A549 (cell line): ENCODE measurements at regions of chr2 and their contacts with region 1.

Region 1: DNA sequence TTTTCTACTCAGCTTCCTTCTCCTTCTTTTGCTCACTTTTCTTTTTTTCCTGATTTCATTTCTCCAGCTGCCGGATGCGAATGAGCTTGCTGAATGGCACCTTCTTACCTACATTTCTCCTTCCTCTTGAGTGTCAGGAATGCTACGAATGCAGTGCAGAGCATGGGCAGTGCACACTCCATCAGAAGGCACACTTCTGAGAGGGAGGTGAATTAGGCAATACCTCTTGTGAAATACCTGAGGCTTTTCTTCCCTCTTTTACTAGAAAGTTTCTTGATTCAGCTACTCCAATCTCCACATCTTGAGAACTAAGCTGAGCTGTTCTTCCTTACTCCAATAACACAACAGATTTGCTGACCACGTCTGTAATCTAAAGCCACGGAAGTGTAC is 51.1 kb downstream of the PLEKHM3 start:
- DNase-seq: peak in 1 of 2 experiments; percentile 26
- ATAC-seq: peak; percentile 51 to 59; a peak in 5 of 6 replicates
- H3K4me3 ChIP-seq: no peak overlapping the region
- H3K27ac ChIP-seq: no peak overlapping the region
- H3K4me1 ChIP-seq: peaks cover 24% of the 10 kb centered on the region
- CTCF ChIP-seq: no peak
- EP300 ChIP-seq: no peak
- POLR2A ChIP-seq: no peak
- RAD21 ChIP-seq: no peak

Region 2: GRCh38 chr2:207499114-207499513 is 475.1 kb before region 1 on chr2:
- CTCF ChIA-PET with region 1: no interaction called
- POLR2A ChIA-PET with region 1: no interaction called
- DNase-seq: no peak
- ATAC-seq: no peak
- H3K4me3 ChIP-seq: no peak overlapping the region
- H3K27ac ChIP-seq: no peak overlapping the region
- H3K4me1 ChIP-seq: no peaks in the 10 kb centered on the region
- CTCF ChIP-seq: no peak
- EP300 ChIP-seq: no peak
- POLR2A ChIP-seq: no peak
- RAD21 ChIP-seq: no peak

Region 3: DNA sequence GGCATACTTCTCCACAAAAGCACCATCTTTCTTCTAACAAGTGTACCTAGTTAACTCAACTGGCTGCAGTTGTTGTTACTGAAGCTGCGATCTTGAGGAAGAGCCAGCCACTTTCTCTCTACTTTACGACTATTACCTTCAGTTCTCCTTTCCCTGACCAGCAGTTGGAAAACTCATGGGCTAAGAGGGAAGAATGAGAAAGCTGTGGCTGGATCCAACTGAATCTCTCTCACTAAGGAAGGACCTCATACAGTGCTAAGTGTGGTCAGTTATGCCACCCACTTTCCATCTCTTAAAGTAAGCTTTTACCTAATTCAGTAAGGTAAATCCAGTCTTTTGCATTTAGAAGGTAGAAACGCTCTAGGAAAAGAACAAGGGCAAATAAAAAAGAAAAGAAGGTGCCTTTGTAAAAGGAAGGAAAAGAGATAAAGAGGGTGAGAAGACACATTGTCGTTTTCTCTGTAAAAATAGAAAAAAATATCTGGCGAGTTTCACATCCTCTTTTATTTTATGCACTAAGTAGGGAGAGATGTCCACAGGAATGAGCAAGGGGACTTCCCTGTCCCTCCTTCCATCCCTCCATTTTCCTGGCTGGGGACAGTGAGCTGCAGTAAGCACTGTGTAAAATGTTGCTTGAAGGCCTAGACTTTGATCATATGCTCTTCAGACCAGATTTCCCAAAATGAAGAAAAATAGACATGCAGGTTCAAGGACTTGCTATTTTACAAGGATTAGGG is 22.3 kb before region 1 on chr2:
- CTCF ChIA-PET with region 1: interaction called, 11 read pairs
- POLR2A ChIA-PET with region 1: no interaction called
- DNase-seq: no peak
- ATAC-seq: no peak
- H3K4me3 ChIP-seq: no peak overlapping the region
- H3K27ac ChIP-seq: no peak overlapping the region
- H3K4me1 ChIP-seq: no peaks in the 10 kb centered on the region
- CTCF ChIP-seq: no peak
- EP300 ChIP-seq: no peak
- POLR2A ChIP-seq: no peak
- RAD21 ChIP-seq: no peak

Region 4: DNA sequence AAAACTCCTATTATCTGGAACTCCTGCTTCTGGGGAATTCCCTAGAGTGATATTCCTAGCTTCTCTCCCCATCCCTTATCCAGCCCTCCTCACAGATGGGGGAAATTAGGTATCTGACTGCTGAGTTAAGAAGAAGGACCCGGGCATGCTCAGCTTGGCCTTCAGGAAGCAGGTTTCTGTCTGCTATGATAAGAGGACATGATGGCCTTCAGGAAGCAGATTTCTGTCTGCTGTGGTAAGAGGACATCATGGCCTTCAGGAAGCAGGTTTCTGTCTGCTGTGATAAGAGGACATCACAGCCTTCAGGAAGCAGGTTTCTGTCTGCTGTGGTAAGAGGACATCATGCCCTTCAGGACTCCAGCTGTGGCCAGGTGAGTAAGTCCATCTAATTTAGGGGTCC is 14.1 kb before region 1 on chr2:
- CTCF ChIA-PET with region 1: interaction called, 12 read pairs
- POLR2A ChIA-PET with region 1: no interaction called
- DNase-seq: no peak
- ATAC-seq: no peak; a peak in 1 of 6 replicates
- H3K4me3 ChIP-seq: no peak overlapping the region
- H3K27ac ChIP-seq: no peak overlapping the region
- H3K4me1 ChIP-seq: no peaks in the 10 kb centered on the region
- CTCF ChIP-seq: no peak
- EP300 ChIP-seq: no peak
- POLR2A ChIP-seq: no peak
- RAD21 ChIP-seq: no peak